ENCODE measurements at regions of chr2 and their contacts with region 1.

Region 1: DNA sequence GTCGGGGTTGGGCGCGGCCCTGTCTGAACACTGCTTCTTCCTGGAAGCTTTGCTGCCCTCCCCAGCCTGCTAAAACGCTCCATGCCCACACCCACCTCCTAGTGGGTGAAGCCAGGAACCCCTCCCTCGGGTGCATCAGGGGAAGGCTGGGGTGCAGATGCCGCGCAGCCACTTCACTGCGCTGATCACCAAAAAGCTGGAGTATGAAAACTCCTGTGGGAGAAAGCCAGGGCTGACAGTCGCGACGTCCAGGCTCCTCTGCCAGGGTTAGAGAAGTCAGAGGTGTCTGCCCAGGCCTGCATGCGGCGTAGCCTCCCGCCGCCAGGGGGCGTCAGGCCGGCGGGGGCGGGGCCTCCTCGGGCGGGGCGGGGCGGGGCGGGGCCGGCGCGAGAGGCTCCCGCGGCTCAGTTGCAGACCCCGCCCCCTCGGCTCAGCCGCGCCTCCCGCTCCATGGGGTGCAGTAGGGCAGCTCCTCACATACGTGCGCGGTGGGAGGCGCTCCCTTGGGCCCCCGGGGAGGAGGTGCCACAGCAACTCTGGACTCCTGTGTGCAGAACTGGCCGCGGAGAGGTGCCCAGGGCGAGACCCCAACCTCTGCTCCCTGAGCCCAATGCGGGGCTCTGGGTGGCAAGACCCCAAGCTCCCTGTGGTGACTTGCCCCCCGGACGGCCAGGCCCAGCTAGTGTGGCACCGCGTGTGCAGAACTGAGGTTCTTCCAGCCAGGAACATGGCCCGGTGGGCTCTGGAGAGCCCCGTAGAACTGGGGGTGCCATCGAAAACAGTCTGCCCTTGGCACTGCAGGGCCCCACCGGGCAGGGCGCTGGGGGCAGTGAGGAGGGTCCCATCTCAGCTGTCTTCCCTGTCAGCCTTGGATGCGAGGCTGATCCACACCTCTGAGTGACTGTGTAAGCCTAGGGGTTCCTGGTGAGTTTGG is 1.8 kb upstream of the RNPEPL1 start:
- DNase-seq: peak in 1 of 2 experiments; percentile 91
- ATAC-seq: peak; percentile 59 to 78
- H3K4me3 ChIP-seq: peak overlapping the region; percentile 41
- H3K27ac ChIP-seq: peak overlapping the region; percentile 96 to 98
- H3K4me1 ChIP-seq: peaks cover 53% of the 10 kb centered on the region
- CTCF ChIP-seq: peak; percentile 92
- EP300 ChIP-seq: no peak
- POLR2A ChIP-seq: peak; percentile 40; the same call in 1 of the 2 replicates
- RAD21 ChIP-seq: peak in 1 of 2 experiments; percentile 31; a peak in 1 of 5 replicates

Region 2: GRCh38 chr2:240579771-240580614 is 13.5 kb after region 1 on chr2:
- CTCF ChIA-PET with region 1: interaction called, 76 read pairs
- POLR2A ChIA-PET with region 1: interaction called, 38 read pairs
- DNase-seq: peak in 1 of 2 experiments; percentile 82
- ATAC-seq: peak; percentile 88 to 90
- H3K4me3 ChIP-seq: 0 out of 3 replicates have a peak overlapping the region, but pooled peaks have one; percentile 2
- H3K27ac ChIP-seq: peak overlapping the region; percentile 29 to 81
- H3K4me1 ChIP-seq: peaks cover 31% of the 10 kb centered on the region
- CTCF ChIP-seq: no peak; the same call in 2 of the 3 replicates
- EP300 ChIP-seq: no peak
- POLR2A ChIP-seq: no peak
- RAD21 ChIP-seq: no peak

Region 3: DNA sequence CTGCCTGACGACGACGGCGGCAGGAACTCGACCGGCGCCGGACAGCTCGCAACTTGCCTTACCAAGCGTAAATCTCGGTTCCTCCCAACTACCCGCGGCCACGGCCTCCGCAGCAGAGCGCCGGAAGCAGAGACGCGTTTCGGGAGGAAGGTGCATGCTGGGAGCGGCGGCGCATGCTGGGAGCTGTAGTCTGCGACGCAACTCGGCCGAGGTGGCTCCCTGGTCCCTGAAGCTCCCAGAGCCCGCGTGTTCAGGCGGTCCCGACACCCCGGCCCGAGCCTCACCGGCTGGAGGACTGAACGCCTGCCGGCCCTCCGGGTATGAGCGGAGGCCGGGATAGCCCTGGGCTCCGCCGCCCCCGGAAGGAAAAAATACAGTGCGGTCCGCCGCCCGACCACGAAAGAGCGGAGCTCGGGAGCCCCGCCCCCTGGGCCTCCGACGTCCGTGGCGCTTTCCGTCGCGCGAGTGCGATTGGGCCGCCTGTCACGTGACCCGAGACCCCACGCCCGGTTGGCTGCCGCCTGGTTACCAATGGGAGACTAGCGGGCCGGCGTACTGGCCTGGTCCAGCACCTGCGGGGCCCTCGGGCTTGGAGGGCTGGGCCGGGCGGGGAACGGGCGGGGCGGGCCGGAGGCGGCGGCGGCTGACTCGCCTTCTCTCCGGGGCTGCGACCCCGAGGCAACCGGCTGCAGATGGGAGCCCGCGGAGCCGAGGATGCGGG is 19.9 kb after region 1 on chr2 and contains the start of gene CAPN10:
- CTCF ChIA-PET with region 1: interaction called, 35 read pairs
- POLR2A ChIA-PET with region 1: interaction called, 38 read pairs
- DNase-seq: peak; percentile 88 to 95
- ATAC-seq: peak; percentile 94 to 96
- H3K4me3 ChIP-seq: peak within 1 kb of the TSS; percentile 82
- H3K27ac ChIP-seq: peak within 1 kb of the TSS; percentile 95 to 96
- H3K4me1 ChIP-seq: peaks cover 23% of the 10 kb centered on the region
- CTCF ChIP-seq: no peak
- EP300 ChIP-seq: no peak
- POLR2A ChIP-seq: peak; percentile 61
- RAD21 ChIP-seq: no peak
- polyA plus RNA-seq, gene CAPN10: 8.4 and 9.5 TPM in 2 replicates